ENCODE measurements at regions of chr16 and their contacts with region 1.

Region 1: DNA sequence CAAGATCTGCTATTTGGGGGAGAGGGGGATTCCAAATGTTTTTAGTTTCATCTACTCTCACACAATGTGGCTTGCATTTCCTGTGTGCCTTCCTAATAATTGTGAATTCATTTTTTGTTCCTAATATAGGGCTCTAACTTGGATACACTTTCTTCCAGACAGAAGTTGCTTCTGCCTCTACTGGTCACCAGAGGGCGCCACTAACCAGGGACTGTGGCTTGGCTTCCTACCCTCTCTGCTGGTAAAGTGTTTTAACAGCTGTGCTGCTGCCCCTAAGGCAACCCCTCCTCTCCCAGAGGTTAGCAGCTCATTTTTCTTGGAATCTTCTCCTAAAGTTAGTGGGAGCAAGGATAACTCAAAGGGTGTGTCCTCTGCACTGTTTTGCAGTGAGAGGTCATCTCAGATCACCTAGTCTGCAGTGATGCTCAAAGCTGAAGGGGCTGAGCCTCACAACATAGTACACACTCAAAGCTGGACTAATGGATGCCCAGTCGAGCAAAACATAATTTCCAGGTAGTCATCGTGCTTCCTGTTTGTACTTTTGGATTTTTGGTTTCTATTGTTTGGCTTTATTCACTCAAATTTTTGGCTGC is 5.0 kb upstream of the PRSS54 start:
- DNase-seq: peak; percentile 65
- ATAC-seq: peak; percentile 96
- H3K4me3 Mint-ChIP-seq: no peak overlapping the region
- H3K27ac Mint-ChIP-seq: no peak overlapping the region
- H3K4me1 Mint-ChIP-seq: 0 out of 2 replicates have a peak, but pooled peaks cover 3% of the 10 kb centered on the region
- H3K27me3 Mint-ChIP-seq: peaks cover 14% of the 10 kb centered on the region
- CTCF ChIP-seq: peak; percentile 76

Region 2: DNA sequence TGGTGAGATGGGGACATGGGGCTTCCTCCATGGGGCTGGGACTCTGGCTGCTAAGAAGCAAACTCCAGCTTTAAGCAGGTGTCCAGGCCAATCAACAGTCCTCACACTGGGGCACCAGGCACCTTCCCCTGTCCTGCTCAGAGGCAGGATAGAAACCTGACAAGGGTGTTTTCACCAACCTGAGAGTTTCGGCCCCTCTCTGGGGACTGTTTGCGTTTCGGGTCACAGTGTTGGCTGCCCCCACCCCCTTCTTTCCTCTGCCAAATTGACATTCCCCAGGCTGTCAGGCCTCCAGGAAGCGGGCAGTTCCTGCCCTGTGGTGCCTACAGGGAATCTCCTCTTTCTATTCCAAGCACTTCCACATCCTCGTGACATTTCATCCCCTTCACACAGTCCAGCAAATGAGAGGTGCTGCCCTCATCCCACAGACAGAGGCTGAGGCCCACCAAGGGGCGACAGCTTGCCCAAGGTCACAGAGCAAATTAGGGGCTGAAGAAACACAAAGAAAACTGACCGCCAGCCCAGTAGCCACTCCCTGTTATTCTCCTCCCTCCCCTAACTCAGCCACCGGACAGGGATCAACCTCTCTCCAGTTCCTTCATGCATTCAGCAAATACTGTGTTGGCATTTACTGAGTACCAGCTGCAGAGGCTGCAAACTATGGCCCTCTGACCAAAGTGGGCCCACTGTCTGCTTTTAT is 236.3 kb before region 1 on chr16:
- CTCF ChIA-PET with region 1: no interaction called
- POLR2A ChIA-PET with region 1: no interaction called
- DNase-seq: no peak
- ATAC-seq: no peak; the same call in 1 of the 2 replicates
- H3K4me3 Mint-ChIP-seq: no peak overlapping the region
- H3K27ac Mint-ChIP-seq: no peak overlapping the region
- H3K4me1 Mint-ChIP-seq: peaks cover 13% of the 10 kb centered on the region
- H3K27me3 Mint-ChIP-seq: no peaks in the 10 kb centered on the region
- CTCF ChIP-seq: no peak

Region 3: GRCh38 chr16:58236231-58236690 is 63.6 kb before region 1 on chr16:
- CTCF ChIA-PET with region 1: no interaction called
- POLR2A ChIA-PET with region 1: no interaction called
- DNase-seq: peak; percentile 89
- ATAC-seq: peak; percentile 98
- H3K4me3 Mint-ChIP-seq: peak overlapping the region; percentile 90
- H3K27ac Mint-ChIP-seq: no peak overlapping the region
- H3K4me1 Mint-ChIP-seq: peaks cover 15% of the 10 kb centered on the region
- H3K27me3 Mint-ChIP-seq: peaks cover 26% of the 10 kb centered on the region
- CTCF ChIP-seq: no peak

Region 4: DNA sequence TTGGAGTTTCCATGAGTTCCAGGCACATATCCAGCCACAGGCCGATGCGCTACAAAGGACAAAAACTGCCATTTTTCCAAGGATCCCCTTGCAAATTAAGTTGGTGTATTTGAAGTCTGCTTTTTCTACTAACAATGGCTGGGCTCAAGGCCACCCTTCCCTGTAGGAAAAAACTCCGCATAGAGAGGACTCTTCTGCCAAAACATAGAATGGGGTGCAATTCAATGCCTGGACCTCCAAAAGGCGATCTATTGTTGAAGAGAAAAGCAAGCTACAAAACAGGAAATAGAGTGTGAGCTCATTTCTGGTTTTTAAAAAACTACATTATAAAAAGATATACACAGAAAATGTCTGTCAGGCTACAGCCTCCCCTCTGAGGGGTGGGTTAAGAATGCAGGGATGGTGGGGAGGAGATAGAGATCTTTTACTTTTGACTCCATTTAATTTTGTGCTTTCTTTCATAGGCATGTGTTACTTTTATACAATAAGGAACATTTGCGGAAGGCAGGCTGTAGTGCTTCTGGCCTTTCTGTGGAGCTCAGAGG is 17.8 kb after region 1 on chr16:
- CTCF ChIA-PET with region 1: interaction called, 19 read pairs
- POLR2A ChIA-PET with region 1: no interaction called
- DNase-seq: no peak
- ATAC-seq: no peak
- H3K4me3 Mint-ChIP-seq: no peak overlapping the region
- H3K27ac Mint-ChIP-seq: no peak overlapping the region
- H3K4me1 Mint-ChIP-seq: peaks cover 8% of the 10 kb centered on the region; the same call in 1 of the 2 replicates
- H3K27me3 Mint-ChIP-seq: no peaks in the 10 kb centered on the region; the same call in 1 of the 2 replicates
- CTCF ChIP-seq: no peak

Region 5: DNA sequence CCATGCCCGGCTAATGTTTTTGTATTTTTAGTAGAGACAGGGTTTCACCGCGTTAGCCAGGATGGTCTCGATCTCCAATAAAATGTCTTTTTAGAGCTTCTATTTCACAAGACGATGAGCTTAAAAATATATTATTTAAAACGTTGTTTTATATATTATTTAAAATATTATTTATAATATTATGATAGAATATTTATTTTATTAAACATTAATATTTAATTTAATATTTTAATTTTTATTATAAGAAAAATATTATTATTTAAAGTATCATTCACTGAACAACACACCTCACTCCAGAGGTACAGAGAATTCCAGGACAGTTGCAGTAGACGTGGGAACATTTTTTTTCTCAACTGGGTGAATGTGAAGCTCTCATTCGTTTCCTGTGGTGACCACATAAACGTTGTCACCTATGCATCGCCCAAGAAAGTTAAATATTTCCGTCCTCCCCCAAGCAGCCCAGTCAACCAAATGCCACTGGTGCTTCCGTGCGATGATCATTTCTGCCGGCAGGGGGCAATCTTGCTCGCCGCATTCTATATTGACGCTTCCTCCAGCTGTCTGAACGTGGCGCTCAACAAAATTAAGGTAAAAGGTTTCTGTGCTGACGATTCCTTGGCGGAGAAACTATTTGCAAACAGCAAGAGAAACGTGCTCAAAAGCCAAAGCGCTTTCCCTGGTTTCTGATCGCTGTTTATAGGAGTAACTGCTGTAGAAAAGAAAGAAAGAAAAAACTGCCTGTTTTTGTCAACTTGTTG is 36.7 kb after region 1 on chr16:
- CTCF ChIA-PET with region 1: interaction called, 37 read pairs
- POLR2A ChIA-PET with region 1: no interaction called
- DNase-seq: peak; percentile 94
- ATAC-seq: peak; percentile 75
- H3K4me3 Mint-ChIP-seq: peak overlapping the region; percentile 31
- H3K27ac Mint-ChIP-seq: peak overlapping the region; percentile 83
- H3K4me1 Mint-ChIP-seq: peaks cover 30% of the 10 kb centered on the region
- H3K27me3 Mint-ChIP-seq: no peaks in the 10 kb centered on the region
- CTCF ChIP-seq: peak; percentile 73

Region 6: GRCh38 chr16:58487566-58488351 is 187.9 kb after region 1 on chr16:
- CTCF ChIA-PET with region 1: interaction called, 101 read pairs
- POLR2A ChIA-PET with region 1: interaction called, 4 read pairs
- DNase-seq: peak; percentile 94
- ATAC-seq: peak; percentile 94
- H3K4me3 Mint-ChIP-seq: no peak overlapping the region
- H3K27ac Mint-ChIP-seq: no peak overlapping the region
- H3K4me1 Mint-ChIP-seq: peaks cover 5% of the 10 kb centered on the region
- H3K27me3 Mint-ChIP-seq: peaks cover 7% of the 10 kb centered on the region
- CTCF ChIP-seq: peak; percentile 95

Region 7: DNA sequence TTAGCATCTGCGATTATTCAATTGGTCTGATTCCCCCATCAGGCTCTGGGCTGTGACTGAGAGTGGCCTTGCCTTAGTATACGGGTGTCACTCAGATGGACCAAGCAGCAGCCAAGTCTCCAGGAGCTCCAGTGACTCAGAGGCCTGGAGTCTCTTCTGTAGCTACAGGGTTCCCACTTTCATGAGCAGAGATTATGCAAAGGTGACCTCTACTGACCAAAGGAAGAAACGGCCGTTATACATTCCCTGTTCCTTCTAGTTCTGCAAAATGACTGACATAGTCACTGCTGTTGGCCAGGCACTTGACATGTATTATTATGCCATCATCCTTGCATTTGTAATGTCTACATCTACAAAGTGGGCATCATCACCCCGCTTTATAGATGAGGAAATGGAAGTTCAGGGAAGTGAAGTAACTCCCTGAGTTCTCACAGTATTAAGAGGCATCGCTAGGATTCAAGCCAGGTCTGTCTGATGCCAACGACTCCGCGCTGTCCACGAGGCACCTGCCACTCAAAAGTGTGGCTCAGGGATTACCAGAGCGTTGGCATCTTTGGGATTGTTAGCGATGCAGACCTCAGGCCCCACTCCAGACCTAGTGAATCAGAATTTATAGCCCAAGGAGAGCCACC is 361.5 kb after region 1 on chr16:
- CTCF ChIA-PET with region 1: interaction called, 10 read pairs
- POLR2A ChIA-PET with region 1: no interaction called
- DNase-seq: peak; percentile 23
- ATAC-seq: peak; percentile 95
- H3K4me3 Mint-ChIP-seq: no peak overlapping the region
- H3K27ac Mint-ChIP-seq: no peak overlapping the region
- H3K4me1 Mint-ChIP-seq: no peaks in the 10 kb centered on the region
- H3K27me3 Mint-ChIP-seq: no peaks in the 10 kb centered on the region; the same call in 1 of the 2 replicates
- CTCF ChIP-seq: 0 out of 2 replicates have a peak, but pooled peaks have one; percentile 13

Measured in WTC11 (cell line).